ENCODE measurements at regions of chr6 and their contacts with region 1.

Region 1: DNA sequence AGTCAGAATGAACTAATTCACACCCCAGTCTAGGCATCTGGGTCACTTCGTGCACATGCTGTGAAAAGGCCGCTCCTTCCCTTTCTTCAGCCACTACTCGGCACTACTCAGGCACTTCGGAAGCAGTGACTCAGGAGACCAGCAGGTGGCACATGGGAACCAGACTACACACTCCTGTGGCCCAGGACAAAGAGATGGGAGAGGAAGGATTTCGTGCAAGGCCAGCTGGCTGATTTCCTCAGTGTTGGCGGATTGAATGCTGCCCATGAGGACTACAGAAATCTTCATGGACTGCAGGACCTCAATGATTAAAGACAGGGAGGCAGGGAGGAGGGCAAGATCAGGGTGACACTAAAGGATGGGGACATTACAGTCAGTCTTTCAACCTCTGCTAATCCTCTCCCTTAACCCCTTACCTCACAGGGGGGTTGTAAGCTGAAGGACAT is 117.8 kb upstream of the SPACA1 start:
- DNase-seq: peak; percentile 83
- ATAC-seq: peak; percentile 70
- H3K4me3 ChIP-seq: no peak overlapping the region
- H3K4me3 Mint-ChIP-seq: no peak overlapping the region
- H3K27ac ChIP-seq: no peak overlapping the region
- H3K27ac Mint-ChIP-seq: no peak overlapping the region
- H3K4me1 ChIP-seq: peaks cover 28 to 30% of the 10 kb centered on the region in 2 donors
- H3K4me1 Mint-ChIP-seq: peaks cover 34% of the 10 kb centered on the region
- H3K27me3 ChIP-seq: no peaks in the 10 kb centered on the region
- H3K27me3 Mint-ChIP-seq: no peaks in the 10 kb centered on the region
- CTCF ChIP-seq: peak; percentile 81

Region 2: GRCh38 chr6:87139236-87139635 is 790.6 kb before region 1 on chr6:
- CTCF ChIA-PET with region 1: no interaction called
- POLR2A ChIA-PET with region 1: no interaction called
- intact Hi-C with region 1: loop called (anchors 2 kb)
- DNase-seq: peak; percentile 76
- ATAC-seq: peak; percentile 65
- H3K4me3 ChIP-seq: no peak overlapping the region
- H3K4me3 Mint-ChIP-seq: no peak overlapping the region
- H3K27ac ChIP-seq: no peak overlapping the region
- H3K27ac Mint-ChIP-seq: no peak overlapping the region
- H3K4me1 ChIP-seq: no peaks in the 10 kb centered on the region
- H3K4me1 Mint-ChIP-seq: peaks cover 1% of the 10 kb centered on the region
- H3K27me3 ChIP-seq: no peaks in the 10 kb centered on the region
- H3K27me3 Mint-ChIP-seq: no peaks in the 10 kb centered on the region
- CTCF ChIP-seq: peak; percentile 88

Region 3: DNA sequence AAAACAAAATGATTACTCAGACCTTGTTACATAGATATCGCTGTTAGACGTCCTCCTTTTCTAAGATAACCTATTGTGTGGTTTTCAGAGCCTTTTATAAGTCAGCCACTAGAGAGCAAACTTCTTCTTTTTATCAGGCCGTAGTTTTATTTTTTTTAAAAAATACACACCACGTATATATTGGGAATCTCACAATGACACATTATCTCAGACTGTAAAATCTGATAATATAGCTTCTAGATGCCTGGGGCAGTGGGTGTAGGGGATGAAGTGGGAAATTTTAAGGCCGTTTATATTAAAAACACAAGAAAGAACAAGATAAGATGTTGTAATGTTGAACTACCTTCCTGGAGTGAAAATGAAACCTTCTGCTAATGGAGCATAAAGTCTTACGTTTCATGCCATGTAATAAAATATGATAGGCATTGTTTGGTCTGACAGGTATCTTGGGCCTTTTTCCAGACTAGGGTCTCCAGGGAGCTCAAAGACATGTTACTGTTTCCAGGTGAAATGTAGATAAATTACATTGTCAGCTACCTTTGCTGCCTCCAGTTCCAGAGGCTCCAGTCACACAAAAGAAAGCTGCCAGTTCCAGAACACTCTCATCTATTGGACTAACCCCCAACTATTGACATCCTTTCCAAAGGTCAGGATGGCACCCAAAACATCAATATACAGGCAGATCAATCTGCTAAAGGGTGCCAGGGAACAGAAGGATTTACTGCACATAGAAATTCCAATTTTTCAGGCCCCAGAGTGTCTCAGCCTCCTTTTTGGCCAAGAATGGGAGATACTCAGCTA is 97.6 kb before region 1 on chr6:
- CTCF ChIA-PET with region 1: interaction called, 72 read pairs
- POLR2A ChIA-PET with region 1: interaction called, 3 read pairs
- intact Hi-C with region 1: loop called (anchors 1 kb)
- DNase-seq: peak; percentile 73
- ATAC-seq: peak; percentile 74
- H3K4me3 ChIP-seq: peak overlapping the region; percentile 42 to 81 (median 64)
- H3K4me3 Mint-ChIP-seq: peak overlapping the region; percentile 89
- H3K27ac ChIP-seq: peak overlapping the region; percentile 74 to 89
- H3K27ac Mint-ChIP-seq: peak overlapping the region; percentile 78
- H3K4me1 ChIP-seq: peaks cover 6 to 7% of the 10 kb centered on the region in 2 donors
- H3K4me1 Mint-ChIP-seq: peaks cover 14% of the 10 kb centered on the region
- H3K27me3 ChIP-seq: no peaks in the 10 kb centered on the region
- H3K27me3 Mint-ChIP-seq: no peaks in the 10 kb centered on the region
- CTCF ChIP-seq: peak; percentile 76

Region 4: DNA sequence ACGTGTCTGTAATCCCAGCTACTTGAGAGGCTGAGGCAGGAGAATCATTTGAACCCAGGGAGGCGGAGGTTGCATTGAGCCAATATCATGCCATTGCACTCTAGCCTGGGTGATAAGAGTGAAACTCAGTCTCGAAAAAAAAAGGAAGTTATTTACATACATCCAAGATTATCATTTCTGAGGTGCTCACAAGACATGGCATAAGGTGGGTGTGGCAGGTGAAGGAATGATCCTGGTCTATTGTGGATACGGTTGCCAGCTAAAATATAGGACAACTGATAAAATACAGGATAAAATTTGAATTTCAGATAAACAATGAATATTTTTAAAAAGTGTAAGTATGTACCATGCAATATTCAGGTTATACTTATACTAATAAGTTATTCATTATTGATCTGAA is 73.4 kb before region 1 on chr6:
- CTCF ChIA-PET with region 1: no interaction called
- POLR2A ChIA-PET with region 1: no interaction called
- intact Hi-C with region 1: no loop called
- DNase-seq: no peak
- ATAC-seq: no peak
- H3K4me3 ChIP-seq: no peak overlapping the region
- H3K4me3 Mint-ChIP-seq: no peak overlapping the region
- H3K27ac ChIP-seq: no peak overlapping the region
- H3K27ac Mint-ChIP-seq: no peak overlapping the region
- H3K4me1 ChIP-seq: no peaks in the 10 kb centered on the region
- H3K4me1 Mint-ChIP-seq: no peaks in the 10 kb centered on the region
- H3K27me3 ChIP-seq: no peaks in the 10 kb centered on the region
- H3K27me3 Mint-ChIP-seq: no peaks in the 10 kb centered on the region
- CTCF ChIP-seq: no peak

Region 5: DNA sequence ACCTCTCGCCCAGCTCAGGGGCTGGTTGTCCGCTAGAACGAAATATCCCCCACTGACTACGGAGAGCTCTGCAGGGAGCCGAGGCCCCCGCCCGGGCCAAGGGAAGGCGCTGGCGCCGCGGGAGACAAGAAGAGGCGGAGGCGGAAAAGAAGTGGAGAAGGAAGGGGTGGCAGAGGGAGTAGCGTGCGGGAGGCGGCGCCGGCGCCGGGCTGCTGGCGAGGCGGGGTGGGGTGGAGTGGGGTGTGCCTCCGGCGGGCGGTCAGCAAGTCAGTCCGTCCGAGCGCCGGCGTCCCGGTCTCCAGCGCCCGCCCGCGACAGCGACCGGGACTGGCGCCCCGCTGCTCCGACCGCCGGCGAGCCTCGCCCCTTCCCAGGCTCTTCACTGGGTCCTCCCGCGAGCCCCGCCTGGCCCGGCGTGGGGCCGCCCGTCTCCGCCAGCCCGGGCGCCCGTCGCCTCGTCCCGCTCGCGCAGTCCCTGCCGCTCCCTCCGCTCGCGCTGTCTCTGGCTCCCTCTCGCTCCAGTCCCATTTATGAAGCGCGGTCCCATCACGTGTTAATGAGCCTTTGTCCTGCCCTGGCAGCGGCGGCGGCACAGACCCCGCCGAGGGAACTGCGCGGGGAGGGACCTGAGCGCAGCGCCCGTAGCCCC is 236.1 kb after region 1 on chr6 and contains the start of gene CNR1:
- CTCF ChIA-PET with region 1: interaction called, 52 read pairs
- POLR2A ChIA-PET with region 1: interaction called, 6 read pairs
- intact Hi-C with region 1: loop called (anchors 1 kb)
- DNase-seq: no peak
- ATAC-seq: peak; percentile 59
- H3K4me3 ChIP-seq: peak within 1 kb of the TSS; percentile 32 to 82 (median 75)
- H3K4me3 Mint-ChIP-seq: peak within 1 kb of the TSS; percentile 98
- H3K27ac ChIP-seq: peak within 1 kb of the TSS; percentile 67 to 89
- H3K27ac Mint-ChIP-seq: peak within 1 kb of the TSS; percentile 98
- H3K4me1 ChIP-seq: peaks cover 21 to 30% of the 10 kb centered on the region in 2 donors
- H3K4me1 Mint-ChIP-seq: peaks cover 33% of the 10 kb centered on the region
- H3K27me3 ChIP-seq: peaks cover 0 to 18% (median 5%) of the 10 kb centered on the region in 4 experiments
- H3K27me3 Mint-ChIP-seq: peaks cover 15% of the 10 kb centered on the region
- CTCF ChIP-seq: no peak
- total RNA-seq, gene CNR1: 20.4 and 28.9 TPM in 2 replicates

Region 6: GRCh38 chr6:88177961-88178464 is 248.1 kb after region 1 on chr6:
- CTCF ChIA-PET with region 1: interaction called, 20 read pairs
- POLR2A ChIA-PET with region 1: interaction called, 3 read pairs
- intact Hi-C with region 1: no loop called
- DNase-seq: peak; percentile 79
- ATAC-seq: peak; percentile 61
- H3K4me3 ChIP-seq: peak overlapping the region in 1 of 5 experiments; percentile 45
- H3K4me3 Mint-ChIP-seq: peak overlapping the region; percentile 57
- H3K27ac ChIP-seq: peak overlapping the region; percentile 61 to 85
- H3K27ac Mint-ChIP-seq: peak overlapping the region; percentile 81
- H3K4me1 ChIP-seq: peaks cover 52 to 63% of the 10 kb centered on the region in 2 donors
- H3K4me1 Mint-ChIP-seq: peaks cover 58% of the 10 kb centered on the region
- H3K27me3 ChIP-seq: no peaks in the 10 kb centered on the region
- H3K27me3 Mint-ChIP-seq: no peaks in the 10 kb centered on the region
- CTCF ChIP-seq: no peak

Region 7: DNA sequence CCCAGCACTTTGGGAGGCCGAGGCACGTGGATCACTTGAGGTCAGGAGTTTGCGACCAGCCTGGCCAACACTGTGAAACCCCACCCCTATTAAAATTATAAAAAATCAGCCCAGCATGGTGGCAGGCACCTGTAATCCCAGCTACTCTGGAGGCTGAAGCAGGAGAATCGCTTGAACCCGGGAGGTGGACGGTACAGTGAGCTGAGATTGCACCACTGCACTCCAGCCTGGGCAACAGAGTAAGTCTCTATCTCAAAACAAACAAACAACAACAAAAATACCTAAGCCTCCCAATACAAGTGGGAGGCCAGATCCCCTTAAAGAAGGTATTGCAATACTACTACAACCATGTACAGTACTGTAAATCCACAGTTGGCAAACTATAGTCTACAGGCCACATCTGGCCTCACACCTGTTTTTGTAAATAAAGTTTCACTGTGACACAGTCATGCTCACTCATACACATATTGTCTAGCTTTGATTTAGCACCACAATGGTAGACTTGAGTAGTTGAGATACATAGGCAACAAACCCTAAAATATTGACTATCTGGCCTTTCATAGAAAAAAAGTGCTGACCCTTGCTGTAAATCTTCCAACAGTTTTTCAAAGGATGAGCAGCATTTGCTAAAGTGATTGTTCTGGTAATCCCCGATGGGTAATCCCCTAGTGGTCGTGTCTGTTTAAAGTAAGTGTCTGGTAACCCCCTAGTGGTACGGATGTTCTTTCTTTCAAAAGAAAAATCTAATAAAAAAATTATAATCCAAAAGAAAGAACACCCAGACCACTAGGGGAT is 831.6 kb after region 1 on chr6:
- CTCF ChIA-PET with region 1: no interaction called
- POLR2A ChIA-PET with region 1: no interaction called
- intact Hi-C with region 1: loop called (anchors 5 kb)
- DNase-seq: peak; percentile 77
- ATAC-seq: peak; percentile 79
- H3K4me3 ChIP-seq: no peak overlapping the region
- H3K4me3 Mint-ChIP-seq: peak overlapping the region; percentile 1
- H3K27ac ChIP-seq: peak overlapping the region in 1 of 2 donors; percentile 70
- H3K27ac Mint-ChIP-seq: peak overlapping the region; percentile 51
- H3K4me1 ChIP-seq: peaks cover 16 to 18% of the 10 kb centered on the region in 2 donors
- H3K4me1 Mint-ChIP-seq: peaks cover 33% of the 10 kb centered on the region
- H3K27me3 ChIP-seq: no peaks in the 10 kb centered on the region
- H3K27me3 Mint-ChIP-seq: no peaks in the 10 kb centered on the region
- CTCF ChIP-seq: peak; percentile 48

Region 8: DNA sequence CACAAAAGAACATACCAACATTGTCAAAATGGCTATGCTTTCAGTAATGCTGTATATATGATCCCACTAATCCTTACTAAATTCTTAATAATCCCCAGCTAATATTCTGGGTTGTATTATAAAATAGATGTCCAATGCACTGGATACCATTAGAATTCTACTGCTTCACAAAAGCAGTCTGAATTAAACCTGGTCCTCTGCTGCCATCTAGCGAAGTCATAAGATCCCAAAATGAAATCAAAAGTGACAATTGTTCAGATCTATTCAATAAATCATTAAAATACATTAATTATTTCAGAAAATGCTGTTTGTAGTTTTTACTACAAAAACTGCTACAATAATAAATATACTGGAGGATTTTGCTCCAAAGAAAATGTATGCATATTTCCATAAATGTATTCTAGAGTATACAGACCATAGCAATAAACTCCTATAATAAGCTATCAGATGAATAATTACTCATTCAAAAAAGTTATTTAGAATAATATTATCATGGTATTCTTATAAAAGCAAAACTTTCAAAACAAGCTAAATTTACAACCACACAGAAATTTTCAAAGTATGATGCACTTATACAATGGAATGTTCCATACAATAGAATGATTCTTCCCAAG is 941.0 kb after region 1 on chr6:
- CTCF ChIA-PET with region 1: interaction called, 17 read pairs
- POLR2A ChIA-PET with region 1: no interaction called
- intact Hi-C with region 1: loop called (anchors 2 kb)
- DNase-seq: peak; percentile 72
- ATAC-seq: no peak
- H3K4me3 ChIP-seq: no peak overlapping the region
- H3K4me3 Mint-ChIP-seq: no peak overlapping the region
- H3K27ac ChIP-seq: no peak overlapping the region
- H3K27ac Mint-ChIP-seq: no peak overlapping the region
- H3K4me1 ChIP-seq: peaks cover 0 to 4% of the 10 kb centered on the region in 2 donors
- H3K4me1 Mint-ChIP-seq: peaks cover 5% of the 10 kb centered on the region
- H3K27me3 ChIP-seq: no peaks in the 10 kb centered on the region
- H3K27me3 Mint-ChIP-seq: no peaks in the 10 kb centered on the region
- CTCF ChIP-seq: peak; percentile 94